Panc1 (cell line): ENCODE measurements at regions of chr5 and their contacts with region 1.

Region 1: GRCh38 chr5:34891981-34892380 is 23.3 kb downstream of the RAD1 start:
- DNase-seq: no peak
- ATAC-seq: no peak
- H3K4me3 ChIP-seq: no peak overlapping the region
- H3K27ac ChIP-seq: no peak overlapping the region
- H3K4me1 ChIP-seq: no peaks in the 10 kb centered on the region
- H3K27me3 ChIP-seq: peaks cover 8% of the 10 kb centered on the region; the same call in 1 of the 2 replicates
- CTCF ChIP-seq: no peak

Region 2: DNA sequence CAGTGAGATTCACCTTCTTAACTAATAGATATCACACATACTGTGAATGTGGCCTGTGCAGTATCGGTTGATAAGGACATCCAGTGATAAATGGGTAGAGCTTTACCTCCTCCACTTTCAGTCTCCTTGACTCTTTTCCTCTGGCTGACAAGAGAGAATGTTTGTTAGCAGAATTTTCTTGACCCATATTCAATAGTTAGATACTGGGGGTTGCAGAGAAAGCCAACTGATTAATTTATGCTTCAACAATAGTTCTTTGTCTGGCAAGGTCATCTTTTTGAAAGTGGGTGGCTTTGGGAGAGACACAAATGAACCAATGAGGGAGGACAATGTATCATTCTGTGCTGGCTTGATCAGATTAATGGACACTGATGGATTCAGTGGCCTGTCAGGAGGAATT is 22.7 kb before region 1 on chr5:
- CTCF ChIA-PET with region 1: interaction called, 14 read pairs
- POLR2A ChIA-PET with region 1: interaction called, 3 read pairs
- in situ Hi-C with region 1: no loop called
- intact Hi-C with region 1: no loop called
- DNase-seq: no peak
- ATAC-seq: no peak
- H3K4me3 ChIP-seq: no peak overlapping the region
- H3K27ac ChIP-seq: no peak overlapping the region
- H3K4me1 ChIP-seq: no peaks in the 10 kb centered on the region
- H3K27me3 ChIP-seq: no peaks in the 10 kb centered on the region; the same call in 1 of the 2 replicates
- CTCF ChIP-seq: no peak

Region 3: GRCh38 chr5:35117967-35118366 is 226.0 kb after region 1 on chr5:
- CTCF ChIA-PET with region 1: no interaction called
- POLR2A ChIA-PET with region 1: no interaction called
- in situ Hi-C with region 1: no loop called
- intact Hi-C with region 1: no loop called
- DNase-seq: no peak
- ATAC-seq: no peak
- H3K4me3 ChIP-seq: no peak overlapping the region
- H3K27ac ChIP-seq: no peak overlapping the region
- H3K4me1 ChIP-seq: no peaks in the 10 kb centered on the region
- H3K27me3 ChIP-seq: no peaks in the 10 kb centered on the region
- CTCF ChIP-seq: no peak

Region 4: DNA sequence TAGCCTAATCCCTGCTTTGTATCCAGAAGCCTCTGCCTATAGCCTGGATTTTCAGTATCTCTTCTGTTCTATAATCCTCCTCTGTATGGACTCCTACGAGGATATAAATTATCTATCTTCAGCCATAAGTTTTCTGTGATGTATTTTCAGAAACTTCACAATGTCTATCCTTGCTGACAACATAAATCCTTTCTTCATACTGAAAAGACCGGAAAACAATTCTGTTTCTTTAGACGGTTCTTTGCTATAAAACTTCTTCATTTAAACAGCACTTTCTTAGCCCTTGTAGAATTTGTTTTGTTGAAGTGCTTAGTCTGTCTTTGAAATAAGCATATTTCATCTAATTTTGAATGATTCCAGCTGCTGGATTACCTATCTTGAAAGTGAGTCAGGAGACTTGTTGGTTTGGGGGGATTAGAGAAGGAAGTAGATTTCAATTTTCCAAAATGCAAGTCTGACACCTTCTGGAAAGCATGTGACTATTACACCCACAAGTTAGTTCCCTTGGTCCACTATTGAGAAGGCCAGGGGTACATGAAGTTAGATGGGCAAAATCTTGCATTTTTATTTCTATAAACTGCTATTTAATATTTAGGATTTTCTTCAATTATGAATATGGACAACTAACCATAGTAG is 1506.0 kb after region 1 on chr5:
- CTCF ChIA-PET with region 1: interaction called, 11 read pairs
- POLR2A ChIA-PET with region 1: no interaction called
- in situ Hi-C with region 1: no loop called
- intact Hi-C with region 1: no loop called
- DNase-seq: no peak
- ATAC-seq: no peak
- H3K4me3 ChIP-seq: no peak overlapping the region
- H3K27ac ChIP-seq: no peak overlapping the region
- H3K4me1 ChIP-seq: no peaks in the 10 kb centered on the region
- H3K27me3 ChIP-seq: no peaks in the 10 kb centered on the region; the same call in 1 of the 2 replicates
- CTCF ChIP-seq: peak; percentile 29; the same call in 1 of the 2 replicates